Activated CD4-positive, alpha-beta T cell treated with anti-CD3 and anti-CD28 coated beads, Interleukin-2, amount 10 ng/mL, durations not matched to agents 7 days and 5 days (primary cell): ENCODE measurements at regions of chr3 and their contacts with region 1.

Region 1: DNA sequence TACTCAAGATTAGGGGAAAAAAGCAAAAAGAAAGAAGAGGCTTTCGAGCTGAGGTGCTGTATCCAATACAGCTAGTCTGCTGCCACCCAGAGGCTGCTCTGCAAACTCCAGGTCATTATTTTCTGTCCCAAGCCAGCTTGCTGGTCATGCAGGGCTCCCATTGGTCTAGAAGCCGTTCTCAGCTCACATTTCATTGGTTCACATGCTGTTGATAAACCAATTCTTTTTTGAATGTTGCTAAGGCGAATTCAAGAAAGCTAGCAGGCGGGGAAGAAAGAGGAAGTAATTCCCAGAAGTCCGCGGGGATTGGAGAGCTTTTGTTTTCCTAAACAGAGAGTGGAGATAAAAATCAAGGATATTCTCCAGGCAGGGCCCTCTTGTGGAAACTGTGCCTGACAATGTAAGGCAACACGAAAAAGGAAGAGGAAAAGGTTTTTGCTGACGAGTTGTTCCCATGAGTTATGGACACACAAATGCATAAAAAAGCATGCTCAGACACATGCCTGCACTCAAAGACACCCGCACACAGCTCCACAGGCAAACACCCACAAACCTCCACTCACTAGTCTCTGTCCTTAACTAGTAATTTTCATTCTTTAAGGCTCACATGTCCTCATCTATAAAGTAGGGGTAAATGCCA is 33.4 kb downstream of the FSTL1 start:
- DNase-seq: peak; percentile 93
- H3K4me3 Mint-ChIP-seq: peak overlapping the region; percentile 76
- H3K27ac Mint-ChIP-seq: peak overlapping the region; percentile 61
- H3K4me1 Mint-ChIP-seq: peaks cover 19% of the 10 kb centered on the region
- H3K27me3 Mint-ChIP-seq: no peaks in the 10 kb centered on the region

Region 2: DNA sequence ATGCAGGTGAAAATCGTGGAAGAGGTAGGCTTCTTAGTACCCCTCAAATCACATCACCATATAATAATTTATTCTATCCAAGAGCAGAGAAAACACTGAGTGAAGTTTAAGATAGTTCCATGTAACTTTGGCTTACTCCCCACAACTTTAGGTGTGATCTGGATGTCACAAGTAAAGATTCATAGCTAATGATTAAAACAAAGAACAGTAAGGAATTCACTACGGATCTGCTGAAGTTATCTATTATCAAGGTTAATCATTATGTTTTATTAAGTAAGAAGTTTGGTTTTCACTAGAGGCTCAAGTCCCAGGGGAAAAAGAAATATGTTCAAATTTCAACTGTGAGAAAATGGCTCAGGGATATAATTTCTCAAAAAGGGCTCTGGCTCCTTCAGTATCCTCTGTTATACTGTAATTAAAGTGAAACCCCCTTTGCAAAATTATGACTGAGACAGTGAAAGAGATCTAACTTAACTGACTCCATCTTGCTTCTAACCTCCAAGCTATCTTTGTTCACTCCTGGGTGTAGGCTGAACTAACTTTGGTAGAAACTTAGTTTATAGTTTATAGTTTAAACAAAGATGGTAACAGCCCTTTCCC is 875.1 kb before region 1 on chr3:
- CTCF ChIA-PET with region 1: no interaction called
- POLR2A ChIA-PET with region 1: no interaction called
- DNase-seq: no peak
- H3K4me3 Mint-ChIP-seq: no peak overlapping the region
- H3K27ac Mint-ChIP-seq: no peak overlapping the region
- H3K4me1 Mint-ChIP-seq: no peaks in the 10 kb centered on the region
- H3K27me3 Mint-ChIP-seq: peaks cover 9% of the 10 kb centered on the region

Region 3: DNA sequence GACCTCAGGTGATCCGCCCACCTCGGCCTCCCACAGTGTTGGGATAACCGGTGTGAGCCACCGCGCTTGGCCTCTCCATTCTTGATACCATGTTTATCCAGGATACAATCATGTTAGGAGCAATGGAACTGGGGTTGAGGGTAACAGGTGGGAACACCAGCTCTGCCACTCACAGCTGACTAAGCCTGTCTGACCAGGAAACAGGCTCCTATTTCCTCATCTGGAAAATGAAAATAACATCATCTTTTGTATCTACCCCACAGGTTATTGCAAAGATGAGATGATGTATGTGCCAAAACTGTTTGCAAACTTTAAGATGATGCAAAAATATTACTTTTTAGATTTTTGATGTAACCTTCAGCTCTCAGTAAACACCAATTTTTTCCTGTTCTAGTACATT is 221.7 kb before region 1 on chr3:
- CTCF ChIA-PET with region 1: no interaction called
- POLR2A ChIA-PET with region 1: no interaction called
- DNase-seq: no peak
- H3K4me3 Mint-ChIP-seq: no peak overlapping the region
- H3K27ac Mint-ChIP-seq: no peak overlapping the region
- H3K4me1 Mint-ChIP-seq: no peaks in the 10 kb centered on the region
- H3K27me3 Mint-ChIP-seq: no peaks in the 10 kb centered on the region

Region 4: DNA sequence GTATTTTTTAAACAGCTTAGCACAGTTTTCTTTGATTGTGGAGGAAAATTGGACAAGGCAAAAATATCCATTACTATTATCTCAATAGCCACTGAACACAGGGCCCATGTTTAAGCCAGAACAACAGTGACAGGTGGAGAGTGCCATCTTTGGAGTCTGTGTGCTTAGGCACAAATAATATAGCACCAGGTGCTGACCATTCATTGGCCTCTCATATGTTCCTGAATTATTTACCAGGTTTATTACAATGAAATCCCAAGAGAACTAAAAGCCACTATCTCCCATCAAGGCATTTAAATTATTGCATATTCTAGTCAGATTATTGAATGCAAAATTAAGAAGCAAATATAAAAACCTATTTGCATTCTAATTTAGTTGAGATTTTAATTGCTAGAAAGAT is 172.0 kb before region 1 on chr3:
- CTCF ChIA-PET with region 1: interaction called, 18 read pairs
- POLR2A ChIA-PET with region 1: no interaction called
- DNase-seq: no peak
- H3K4me3 Mint-ChIP-seq: no peak overlapping the region
- H3K27ac Mint-ChIP-seq: no peak overlapping the region
- H3K4me1 Mint-ChIP-seq: no peaks in the 10 kb centered on the region
- H3K27me3 Mint-ChIP-seq: peaks cover 9% of the 10 kb centered on the region